ENCODE measurements at regions of chr10 and their contacts with region 1.

Region 1: GRCh38 chr10:99620713-99621453 is 644 bp upstream of the SLC25A28 start:
- DNase-seq: peak; percentile 80
- ATAC-seq: peak; percentile 85
- H3K4me3 Mint-ChIP-seq: peak overlapping the region; percentile 92
- H3K27ac Mint-ChIP-seq: peak overlapping the region; percentile 95
- H3K4me1 Mint-ChIP-seq: peaks cover 49% of the 10 kb centered on the region
- H3K27me3 Mint-ChIP-seq: no peaks in the 10 kb centered on the region
- CTCF ChIP-seq: no peak

Region 2: GRCh38 chr10:99430451-99431189 is 190.3 kb before region 1 on chr10 and contains the start of gene GOT1:
- CTCF ChIA-PET with region 1: interaction called, 23 read pairs
- POLR2A ChIA-PET with region 1: interaction called, 26 read pairs
- intact Hi-C with region 1: loop called (anchors 1 kb)
- DNase-seq: peak; percentile 85
- ATAC-seq: peak; percentile 91
- H3K4me3 Mint-ChIP-seq: peak within 1 kb of the TSS; percentile 98
- H3K27ac Mint-ChIP-seq: peak within 1 kb of the TSS; percentile 92
- H3K4me1 Mint-ChIP-seq: peaks cover 29% of the 10 kb centered on the region
- H3K27me3 Mint-ChIP-seq: no peaks in the 10 kb centered on the region
- CTCF ChIP-seq: no peak
- total RNA-seq, gene GOT1: 30.1 and 31.4 TPM in 2 replicates

Region 3: DNA sequence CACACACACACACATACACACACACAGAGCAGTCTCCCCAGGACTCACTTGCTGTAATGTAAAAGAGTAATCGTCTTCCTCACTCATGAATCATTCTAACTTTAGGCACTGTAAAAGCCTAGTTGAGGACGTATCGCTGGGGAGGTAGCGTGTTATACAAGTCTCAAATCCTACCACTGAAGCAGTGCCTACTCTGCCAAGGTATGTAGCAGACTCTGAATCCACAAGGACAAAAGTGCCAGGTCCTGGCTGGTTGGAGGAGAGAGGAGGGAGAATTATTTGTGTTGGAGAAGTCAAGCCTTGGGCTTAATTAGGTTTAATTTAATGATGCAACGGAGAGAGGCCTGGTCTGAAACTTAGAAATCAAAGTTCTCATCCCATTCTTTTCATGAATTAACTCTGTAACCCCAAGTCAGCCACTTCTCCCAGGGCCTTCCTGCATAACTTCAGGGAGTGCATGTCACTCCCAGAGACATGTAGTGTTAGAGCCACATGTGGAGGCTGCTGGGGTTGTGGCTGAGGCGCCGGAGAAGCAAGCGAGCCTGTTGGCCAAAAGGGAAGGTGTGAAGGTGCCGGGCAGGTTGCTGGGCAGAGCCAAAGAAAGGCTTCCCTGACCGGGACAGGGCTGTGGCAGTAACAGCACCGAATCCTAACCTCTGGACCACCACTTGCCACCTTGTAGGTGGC is 51.5 kb before region 1 on chr10:
- CTCF ChIA-PET with region 1: interaction called, 150 read pairs
- POLR2A ChIA-PET with region 1: interaction called, 8 read pairs
- intact Hi-C with region 1: loop called (anchors 2 kb)
- DNase-seq: no peak
- ATAC-seq: peak; percentile 18
- H3K4me3 Mint-ChIP-seq: no peak overlapping the region
- H3K27ac Mint-ChIP-seq: peak overlapping the region; percentile 85
- H3K4me1 Mint-ChIP-seq: peaks cover 26% of the 10 kb centered on the region
- H3K27me3 Mint-ChIP-seq: no peaks in the 10 kb centered on the region
- CTCF ChIP-seq: no peak

Region 4: GRCh38 chr10:99583687-99584086 is 37.2 kb before region 1 on chr10:
- CTCF ChIA-PET with region 1: no interaction called
- POLR2A ChIA-PET with region 1: no interaction called
- intact Hi-C with region 1: no loop called
- DNase-seq: no peak
- ATAC-seq: no peak
- H3K4me3 Mint-ChIP-seq: no peak overlapping the region
- H3K27ac Mint-ChIP-seq: no peak overlapping the region
- H3K4me1 Mint-ChIP-seq: no peaks in the 10 kb centered on the region
- H3K27me3 Mint-ChIP-seq: peaks cover 2% of the 10 kb centered on the region
- CTCF ChIP-seq: no peak

Region 5: GRCh38 chr10:99711129-99711719 is 90.3 kb after region 1 on chr10:
- CTCF ChIA-PET with region 1: no interaction called
- POLR2A ChIA-PET with region 1: no interaction called
- intact Hi-C with region 1: loop called (anchors 10 kb)
- DNase-seq: no peak
- ATAC-seq: peak; percentile 60
- H3K4me3 Mint-ChIP-seq: no peak overlapping the region
- H3K27ac Mint-ChIP-seq: no peak overlapping the region
- H3K4me1 Mint-ChIP-seq: no peaks in the 10 kb centered on the region
- H3K27me3 Mint-ChIP-seq: no peaks in the 10 kb centered on the region
- CTCF ChIP-seq: no peak

Region 6: DNA sequence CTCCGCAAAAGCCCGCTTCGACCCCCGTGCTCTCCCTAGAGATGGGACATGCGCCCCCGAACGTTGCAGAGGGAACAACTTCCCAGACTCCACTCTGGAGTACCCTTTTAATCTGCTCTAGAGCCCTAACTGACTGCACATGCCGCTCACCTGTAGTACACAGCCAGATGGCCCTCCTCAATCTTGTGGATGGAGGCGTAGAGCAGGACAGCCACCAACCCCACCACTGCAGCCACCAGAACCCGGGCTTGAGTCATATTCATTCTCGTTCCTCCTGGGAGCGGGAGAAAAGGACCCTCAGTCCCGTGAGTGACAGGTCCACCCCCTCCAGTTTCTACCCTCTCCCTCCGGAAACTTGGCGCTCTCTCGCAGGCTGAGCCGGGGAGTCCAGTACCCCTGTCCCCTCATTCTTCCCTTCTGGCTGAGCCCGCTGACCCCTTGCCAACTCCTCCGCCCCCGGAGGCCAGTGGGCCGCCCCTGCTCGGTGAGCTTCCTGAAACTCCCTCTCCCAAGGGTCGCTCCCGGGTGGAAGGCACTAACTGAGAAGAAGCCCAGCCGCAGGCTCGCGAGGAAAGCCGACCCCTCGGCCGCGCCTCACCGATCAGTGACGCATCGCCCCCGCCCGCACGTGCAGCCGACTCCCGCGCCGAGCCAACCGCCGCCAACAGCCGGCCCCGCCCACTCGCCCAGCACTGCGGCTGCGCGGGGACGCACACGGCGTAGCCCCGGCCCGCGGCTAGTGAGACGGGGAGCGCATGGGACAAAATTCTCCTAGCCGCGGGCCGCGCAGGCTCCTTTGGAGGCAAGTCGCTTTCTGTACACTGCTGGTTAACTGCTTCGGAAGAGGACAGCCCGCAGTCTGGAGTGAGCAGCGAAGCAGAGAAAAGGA is 564.7 kb after region 1 on chr10 and contains the start of gene ERLIN1:
- CTCF ChIA-PET with region 1: no interaction called
- POLR2A ChIA-PET with region 1: no interaction called
- intact Hi-C with region 1: loop called (anchors 5 kb)
- DNase-seq: peak; percentile 96
- ATAC-seq: peak; percentile 92
- H3K4me3 Mint-ChIP-seq: peak within 1 kb of the TSS; percentile 98
- H3K27ac Mint-ChIP-seq: peak within 1 kb of the TSS; percentile 92
- H3K4me1 Mint-ChIP-seq: peaks cover 37% of the 10 kb centered on the region
- H3K27me3 Mint-ChIP-seq: no peaks in the 10 kb centered on the region
- CTCF ChIP-seq: no peak
- total RNA-seq, gene ERLIN1: 5.6 and 7.6 TPM in 2 replicates

Measured in activated B cell treated with CpG ODN at 0.5 μM for 24 hours (primary cell).